Stomach (tissue), 19 donors: ENCODE measurements at regions of chr20 and their contacts with region 1.

Region 1: GRCh38 chr20:59222253-59223181 is 58.9 kb downstream of the ZNF831 start:
- DNase-seq: peak; percentile 84 to 93
- H3K4me3 ChIP-seq: peak overlapping the region; percentile 50 to 68 (median 54)
- H3K27ac ChIP-seq: peak overlapping the region in 4 of 5 donors; percentile 33 to 63 (median 53)
- H3K4me1 ChIP-seq: peaks cover 8 to 23% (median 18%) of the 10 kb centered on the region in 4 donors
- H3K27me3 ChIP-seq: peaks cover 0 to 61% (median 13%) of the 10 kb centered on the region in 3 donors
- CTCF ChIP-seq: peak in 5 of 7 experiments; percentile 73 to 96 (median 94)
- EP300 ChIP-seq: no peak
- POLR2A ChIP-seq: no peak

Region 2: GRCh38 chr20:58870239-58871014 is 352.1 kb before region 1 on chr20:
- intact Hi-C with region 1: loop called (anchors 5 kb)
- DNase-seq: peak; percentile 79 to 89
- H3K4me3 ChIP-seq: no peak overlapping the region
- H3K27ac ChIP-seq: no peak overlapping the region
- H3K4me1 ChIP-seq: peaks cover 0 to 4% (median 0%) of the 10 kb centered on the region in 4 donors
- H3K27me3 ChIP-seq: no peaks in the 10 kb centered on the region
- CTCF ChIP-seq: peak in 5 of 7 experiments; percentile 77 to 85 (median 82)
- EP300 ChIP-seq: no peak
- POLR2A ChIP-seq: no peak

Region 3: DNA sequence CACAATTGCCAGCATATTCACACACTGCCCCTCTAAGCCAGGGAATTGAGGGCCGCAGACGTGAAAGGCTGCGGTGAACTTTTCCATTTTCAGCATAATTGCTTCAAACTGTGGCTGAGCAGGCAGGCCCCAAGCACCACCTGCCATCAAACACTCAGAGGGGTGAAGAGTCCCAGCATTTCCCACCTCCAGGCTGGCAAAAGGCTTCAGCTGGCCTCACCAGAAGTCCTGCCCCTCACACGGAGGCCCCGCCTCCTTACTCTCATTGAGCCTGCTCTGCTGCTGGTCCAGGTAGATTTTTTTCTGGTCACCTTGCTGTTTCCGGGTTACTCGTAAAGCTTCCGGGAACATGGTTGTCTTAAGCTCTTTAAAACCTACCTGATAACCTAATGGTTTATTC is 127.9 kb before region 1 on chr20:
- intact Hi-C with region 1: loop called (anchors 5 kb)
- DNase-seq: no peak
- H3K4me3 ChIP-seq: no peak overlapping the region
- H3K27ac ChIP-seq: no peak overlapping the region
- H3K4me1 ChIP-seq: no peaks in the 10 kb centered on the region
- H3K27me3 ChIP-seq: no peaks in the 10 kb centered on the region
- CTCF ChIP-seq: no peak
- EP300 ChIP-seq: no peak
- POLR2A ChIP-seq: no peak